Activated B cell treated with CpG ODN at 0.5 μM for 24 hours (primary cell): ENCODE measurements at regions of chr9 and their contacts with region 1.

Region 1: DNA sequence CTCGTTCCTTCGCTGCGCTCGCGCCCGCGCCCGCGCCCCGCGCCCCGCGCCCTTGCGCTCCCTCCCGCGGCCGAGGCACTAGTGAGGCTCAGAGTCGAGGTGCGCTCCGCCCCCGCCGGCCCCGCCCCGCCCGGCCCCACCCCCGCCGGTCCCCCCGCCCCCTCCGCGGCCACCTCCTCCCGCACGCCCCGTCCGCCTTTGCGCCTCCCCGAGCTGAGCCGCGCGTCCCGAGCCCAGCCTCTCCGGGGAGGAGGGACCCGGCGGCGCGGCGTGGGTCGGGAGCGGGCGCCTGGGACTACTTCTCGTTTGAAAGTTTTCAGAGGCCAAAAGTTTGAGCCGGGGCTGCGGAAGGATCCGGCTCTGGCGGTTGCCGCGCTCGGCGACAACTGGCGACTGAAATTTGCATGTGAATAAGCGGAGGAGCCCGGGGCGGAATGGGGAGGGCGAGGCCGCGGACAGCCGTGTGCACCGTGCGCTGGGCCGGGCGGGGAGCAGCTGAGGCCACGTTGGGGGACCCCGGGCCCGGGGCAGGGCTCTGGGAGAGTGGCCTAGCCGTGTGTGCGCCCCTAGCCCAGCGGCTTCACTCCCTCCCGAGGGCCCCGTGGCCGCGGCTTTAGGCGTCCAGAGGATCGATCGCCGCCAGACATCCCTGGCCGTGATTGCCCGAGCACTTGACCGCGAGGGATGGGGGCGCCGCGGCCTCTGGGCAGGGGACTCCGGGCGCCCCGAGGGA is at the start of gene NOTCH1:
- DNase-seq: peak; percentile 84
- ATAC-seq: peak; percentile 76
- H3K4me3 Mint-ChIP-seq: peak within 1 kb of the TSS; percentile 87
- H3K27ac Mint-ChIP-seq: peak within 1 kb of the TSS; percentile 90
- H3K4me1 Mint-ChIP-seq: peaks cover 39% of the 10 kb centered on the region
- H3K27me3 Mint-ChIP-seq: no peaks in the 10 kb centered on the region
- CTCF ChIP-seq: no peak
- total RNA-seq, gene NOTCH1: 24.9 and 26.6 TPM in 2 replicates

Region 2: GRCh38 chr9:136533775-136534157 is 12.4 kb before region 1 on chr9:
- CTCF ChIA-PET with region 1: no interaction called
- POLR2A ChIA-PET with region 1: interaction called, 25 read pairs
- intact Hi-C with region 1: loop called (anchors 1 kb)
- DNase-seq: no peak
- ATAC-seq: peak; percentile 38
- H3K4me3 Mint-ChIP-seq: peak overlapping the region; percentile 44
- H3K27ac Mint-ChIP-seq: peak overlapping the region; percentile 56
- H3K4me1 Mint-ChIP-seq: peaks cover 79% of the 10 kb centered on the region
- H3K27me3 Mint-ChIP-seq: no peaks in the 10 kb centered on the region
- CTCF ChIP-seq: no peak

Region 3: DNA sequence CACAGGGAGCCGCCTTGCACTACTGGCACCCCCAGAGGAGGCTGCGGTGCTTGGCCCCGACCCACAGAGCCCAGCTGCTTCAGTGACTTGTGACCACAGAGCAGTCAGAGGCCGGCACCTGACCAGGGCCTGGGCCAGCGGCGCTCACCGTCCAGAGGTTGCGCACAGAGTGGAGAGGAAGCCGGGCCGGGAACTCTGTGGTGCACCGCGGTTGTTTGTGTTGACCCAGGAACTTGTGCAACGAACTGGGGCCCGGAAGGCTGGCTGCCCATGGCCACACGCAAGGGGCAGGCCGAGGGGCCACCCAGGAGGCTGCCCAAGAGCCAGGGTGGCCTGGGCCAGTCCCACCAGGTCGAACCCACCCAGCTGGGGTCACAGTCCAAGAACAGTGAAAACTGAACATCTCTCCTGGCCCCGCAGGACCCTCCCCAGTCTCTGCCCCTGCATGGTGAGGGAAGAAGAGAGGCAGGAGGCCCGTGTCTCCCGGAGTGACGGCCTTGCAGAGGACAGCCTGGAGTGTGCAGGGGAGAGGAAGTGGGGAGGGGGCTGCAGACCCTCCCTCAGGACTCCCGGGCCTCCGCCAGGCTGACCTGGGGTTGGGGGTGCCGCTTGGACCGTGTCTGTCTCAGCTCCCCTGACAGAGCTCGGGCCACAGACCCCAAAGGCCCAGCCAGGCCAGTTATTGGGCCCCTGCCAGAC is 73.8 kb after region 1 on chr9:
- CTCF ChIA-PET with region 1: interaction called, 3 read pairs
- POLR2A ChIA-PET with region 1: interaction called, 3 read pairs
- intact Hi-C with region 1: loop called (anchors 2 kb)
- DNase-seq: no peak
- ATAC-seq: no peak
- H3K4me3 Mint-ChIP-seq: peak overlapping the region; percentile 44
- H3K27ac Mint-ChIP-seq: peak overlapping the region; percentile 66
- H3K4me1 Mint-ChIP-seq: peaks cover 40% of the 10 kb centered on the region
- H3K27me3 Mint-ChIP-seq: no peaks in the 10 kb centered on the region
- CTCF ChIP-seq: no peak